Activated CD8-positive, alpha-beta memory T cell treated with anti-CD3 and anti-CD28 coated beads, Interleukin-2, amount 10 ng/mL, durations not matched to agents 7 days and 5 days (primary cell): ENCODE measurements at regions of chr14 and their contacts with region 1.

Region 1: GRCh38 chr14:23631702-23632460 is 4.3 kb upstream of the DHRS2 start:
- DNase-seq: peak; percentile 81
- ATAC-seq: peak; percentile 82
- H3K4me3 Mint-ChIP-seq: no peak overlapping the region
- H3K27ac Mint-ChIP-seq: peak overlapping the region; percentile 12
- H3K4me1 Mint-ChIP-seq: peaks cover 35% of the 10 kb centered on the region
- H3K27me3 Mint-ChIP-seq: peaks cover 1% of the 10 kb centered on the region

Region 2: GRCh38 chr14:23588884-23589598 is 42.8 kb before region 1 on chr14:
- CTCF ChIA-PET with region 1: interaction called, 90 read pairs
- DNase-seq: peak; percentile 90
- ATAC-seq: peak; percentile 99
- H3K4me3 Mint-ChIP-seq: no peak overlapping the region
- H3K27ac Mint-ChIP-seq: no peak overlapping the region
- H3K4me1 Mint-ChIP-seq: peaks cover 12% of the 10 kb centered on the region
- H3K27me3 Mint-ChIP-seq: peaks cover 17% of the 10 kb centered on the region

Region 3: DNA sequence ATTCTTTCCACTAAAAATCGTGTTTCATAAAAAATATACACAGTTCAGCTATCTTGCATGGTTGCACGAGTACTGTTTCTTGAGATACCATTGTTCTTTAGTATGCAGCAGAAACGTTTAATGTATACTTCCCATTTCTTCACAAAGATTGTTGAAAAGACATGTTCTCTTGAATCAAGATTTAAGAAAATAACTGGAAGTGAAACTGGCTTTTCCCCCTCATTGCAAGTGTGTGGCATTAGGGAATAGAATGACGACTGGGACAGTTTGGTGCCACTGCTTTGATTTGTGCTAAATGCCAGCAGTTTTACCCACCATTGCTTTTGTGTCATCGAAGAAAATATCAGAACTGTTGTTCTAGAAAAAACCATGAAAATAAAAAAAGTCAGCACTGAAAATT is 16.0 kb before region 1 on chr14:
- CTCF ChIA-PET with region 1: interaction called, 86 read pairs
- DNase-seq: no peak
- ATAC-seq: no peak
- H3K4me3 Mint-ChIP-seq: no peak overlapping the region
- H3K27ac Mint-ChIP-seq: no peak overlapping the region
- H3K4me1 Mint-ChIP-seq: peaks cover 10% of the 10 kb centered on the region
- H3K27me3 Mint-ChIP-seq: peaks cover 11% of the 10 kb centered on the region

Region 4: GRCh38 chr14:23646648-23647549 is 15.0 kb after region 1 on chr14:
- CTCF ChIA-PET with region 1: interaction called, 37 read pairs
- DNase-seq: no peak
- ATAC-seq: peak; percentile 15
- H3K4me3 Mint-ChIP-seq: no peak overlapping the region
- H3K27ac Mint-ChIP-seq: peak overlapping the region; percentile 69
- H3K4me1 Mint-ChIP-seq: peaks cover 41% of the 10 kb centered on the region
- H3K27me3 Mint-ChIP-seq: no peaks in the 10 kb centered on the region

Region 5: DNA sequence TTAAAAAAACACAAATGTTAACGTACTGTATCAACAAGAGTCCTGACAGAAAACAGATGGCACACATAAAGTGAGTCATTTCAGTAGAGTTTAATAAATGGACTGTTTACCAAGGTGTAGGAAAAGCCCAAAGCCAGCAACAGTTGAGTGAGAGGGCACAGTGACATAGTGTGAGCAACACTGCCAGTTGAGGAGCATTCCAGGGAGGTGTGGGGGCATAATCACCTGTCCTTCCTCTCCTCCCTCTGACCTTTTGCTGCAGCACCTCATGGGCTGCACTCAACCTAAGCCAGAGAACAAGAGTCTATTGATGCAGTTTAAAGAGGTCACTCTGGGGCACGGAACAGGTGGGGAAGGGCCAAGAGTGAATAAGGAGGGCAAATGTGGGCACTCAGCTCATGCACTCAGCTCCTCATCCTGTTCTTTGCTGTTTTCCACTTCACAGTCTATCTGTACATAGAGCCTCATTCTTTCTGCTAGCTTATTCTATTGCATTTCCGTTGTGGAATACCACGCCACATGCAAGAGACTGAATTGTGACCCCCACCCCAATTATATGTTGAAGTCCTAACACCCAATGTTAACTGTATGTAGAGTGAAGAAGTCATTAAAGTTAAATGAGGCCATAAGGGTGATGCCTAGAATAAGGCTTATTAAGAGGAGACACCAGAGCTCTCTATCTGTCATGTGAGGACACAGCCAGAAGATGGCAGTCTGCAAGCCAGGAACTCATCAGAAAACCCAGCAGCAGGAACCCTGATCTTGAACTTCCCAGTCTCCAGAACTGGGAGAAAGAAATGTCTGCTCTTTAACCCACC is 33.7 kb after region 1 on chr14:
- CTCF ChIA-PET with region 1: interaction called, 42 read pairs
- DNase-seq: peak; percentile 53
- ATAC-seq: no peak
- H3K4me3 Mint-ChIP-seq: no peak overlapping the region
- H3K27ac Mint-ChIP-seq: no peak overlapping the region
- H3K4me1 Mint-ChIP-seq: peaks cover 11% of the 10 kb centered on the region
- H3K27me3 Mint-ChIP-seq: peaks cover 8% of the 10 kb centered on the region

Region 6: GRCh38 chr14:23929822-23930294 is 298.0 kb after region 1 on chr14:
- CTCF ChIA-PET with region 1: interaction called, 29 read pairs
- DNase-seq: peak; percentile 88
- ATAC-seq: peak; percentile 85
- H3K4me3 Mint-ChIP-seq: no peak overlapping the region
- H3K27ac Mint-ChIP-seq: no peak overlapping the region
- H3K4me1 Mint-ChIP-seq: no peaks in the 10 kb centered on the region
- H3K27me3 Mint-ChIP-seq: peaks cover 6% of the 10 kb centered on the region